A549 (cell line): ENCODE measurements at regions of chr1 and their contacts with region 1.

Region 1: DNA sequence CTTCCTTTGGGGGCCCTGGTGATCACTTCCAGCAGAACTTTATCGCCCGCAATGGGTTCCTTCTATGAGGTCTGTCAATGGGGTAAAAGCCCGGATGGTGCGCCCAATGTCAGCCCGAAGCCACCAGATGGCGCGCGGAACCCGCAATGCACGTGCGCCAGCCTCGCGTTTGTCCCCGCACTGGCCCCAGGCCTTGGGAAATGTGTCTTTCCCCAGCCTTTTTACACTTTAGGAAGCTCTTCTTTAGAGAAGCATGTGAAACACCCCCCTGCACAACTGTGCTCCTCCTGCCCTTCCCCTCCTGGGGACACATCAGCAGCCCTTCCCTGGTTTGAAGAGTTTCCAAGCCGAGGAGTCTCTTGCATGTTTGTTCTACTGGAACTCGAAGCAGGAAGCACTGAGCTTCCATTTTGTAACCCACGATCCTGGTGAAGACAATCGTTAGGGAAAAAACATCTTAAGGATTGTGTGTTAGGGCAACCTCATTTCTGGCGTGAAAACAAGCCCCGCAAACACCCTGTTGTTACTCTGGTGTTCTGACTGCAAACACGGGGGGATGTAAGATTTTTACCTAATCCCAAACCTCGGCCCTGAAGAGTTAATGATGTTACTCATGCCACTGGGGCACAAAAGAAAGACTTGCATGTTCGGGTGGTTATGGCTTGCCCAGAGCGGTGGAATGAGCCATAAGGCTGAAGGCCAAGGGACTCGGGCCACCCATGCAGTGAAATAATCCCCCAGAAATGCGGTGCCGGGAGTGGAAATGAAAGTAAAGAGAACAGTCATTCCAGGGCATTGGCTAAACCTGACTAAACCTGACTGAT is 20.4 kb upstream of the TARBP1 start:
- DNase-seq: peak; percentile 86 to 87
- ATAC-seq: peak; percentile 93 to 94
- H3K4me3 ChIP-seq: no peak overlapping the region
- H3K27ac ChIP-seq: peak overlapping the region; percentile 88 to 94
- H3K4me1 ChIP-seq: peaks cover 74% of the 10 kb centered on the region
- CTCF ChIP-seq: peak; percentile 95
- EP300 ChIP-seq: no peak
- POLR2A ChIP-seq: no peak
- RAD21 ChIP-seq: peak; percentile 98 to 100

Region 2: GRCh38 chr1:234398849-234399381 is 100.4 kb before region 1 on chr1:
- CTCF ChIA-PET with region 1: no interaction called
- POLR2A ChIA-PET with region 1: no interaction called
- DNase-seq: no peak
- ATAC-seq: no peak
- H3K4me3 ChIP-seq: no peak overlapping the region
- H3K27ac ChIP-seq: no peak overlapping the region
- H3K4me1 ChIP-seq: no peaks in the 10 kb centered on the region
- CTCF ChIP-seq: no peak
- EP300 ChIP-seq: no peak
- POLR2A ChIP-seq: no peak
- RAD21 ChIP-seq: no peak

Region 3: GRCh38 chr1:234486498-234487448 is 12.6 kb before region 1 on chr1:
- CTCF ChIA-PET with region 1: interaction called, 31 read pairs
- POLR2A ChIA-PET with region 1: interaction called, 7 read pairs
- DNase-seq: peak; percentile 59 to 69
- ATAC-seq: peak; percentile 84 to 86; a peak in 5 of 6 replicates
- H3K4me3 ChIP-seq: no peak overlapping the region
- H3K27ac ChIP-seq: peak overlapping the region in 1 of 2 experiments; percentile 36; a peak in 2 of 6 replicates
- H3K4me1 ChIP-seq: peaks cover 5% of the 10 kb centered on the region; the same call in 1 of the 3 replicates
- CTCF ChIP-seq: peak; percentile 75
- EP300 ChIP-seq: no peak
- POLR2A ChIP-seq: no peak
- RAD21 ChIP-seq: peak; percentile 87 to 91

Region 4: DNA sequence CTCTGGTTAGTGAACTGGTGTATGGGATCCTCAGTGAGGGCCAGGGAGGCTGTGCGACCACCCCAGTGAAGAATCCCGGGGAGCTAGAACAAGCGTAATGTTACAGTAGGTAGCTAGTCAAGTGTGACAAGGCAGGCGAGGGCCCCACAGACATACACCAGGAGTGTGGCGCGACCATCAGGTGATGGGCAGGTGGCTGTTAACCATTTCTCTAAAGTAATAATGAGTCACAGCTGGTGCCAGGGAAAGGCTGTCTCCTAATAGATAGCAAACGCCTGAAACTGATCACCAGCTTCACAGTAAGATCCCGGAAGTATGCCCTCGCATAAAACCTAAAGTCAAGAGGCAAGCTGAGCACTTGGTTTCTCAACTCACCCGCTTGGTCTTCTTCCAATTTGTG is 20.2 kb after region 1 on chr1:
- CTCF ChIA-PET with region 1: interaction called, 14 read pairs
- POLR2A ChIA-PET with region 1: no interaction called
- DNase-seq: no peak
- ATAC-seq: no peak
- H3K4me3 ChIP-seq: no peak overlapping the region
- H3K27ac ChIP-seq: peak overlapping the region in 1 of 2 experiments; percentile 91; a peak in 3 of 6 replicates
- H3K4me1 ChIP-seq: peaks cover 56% of the 10 kb centered on the region
- CTCF ChIP-seq: no peak
- EP300 ChIP-seq: no peak
- POLR2A ChIP-seq: no peak
- RAD21 ChIP-seq: no peak

Region 5: DNA sequence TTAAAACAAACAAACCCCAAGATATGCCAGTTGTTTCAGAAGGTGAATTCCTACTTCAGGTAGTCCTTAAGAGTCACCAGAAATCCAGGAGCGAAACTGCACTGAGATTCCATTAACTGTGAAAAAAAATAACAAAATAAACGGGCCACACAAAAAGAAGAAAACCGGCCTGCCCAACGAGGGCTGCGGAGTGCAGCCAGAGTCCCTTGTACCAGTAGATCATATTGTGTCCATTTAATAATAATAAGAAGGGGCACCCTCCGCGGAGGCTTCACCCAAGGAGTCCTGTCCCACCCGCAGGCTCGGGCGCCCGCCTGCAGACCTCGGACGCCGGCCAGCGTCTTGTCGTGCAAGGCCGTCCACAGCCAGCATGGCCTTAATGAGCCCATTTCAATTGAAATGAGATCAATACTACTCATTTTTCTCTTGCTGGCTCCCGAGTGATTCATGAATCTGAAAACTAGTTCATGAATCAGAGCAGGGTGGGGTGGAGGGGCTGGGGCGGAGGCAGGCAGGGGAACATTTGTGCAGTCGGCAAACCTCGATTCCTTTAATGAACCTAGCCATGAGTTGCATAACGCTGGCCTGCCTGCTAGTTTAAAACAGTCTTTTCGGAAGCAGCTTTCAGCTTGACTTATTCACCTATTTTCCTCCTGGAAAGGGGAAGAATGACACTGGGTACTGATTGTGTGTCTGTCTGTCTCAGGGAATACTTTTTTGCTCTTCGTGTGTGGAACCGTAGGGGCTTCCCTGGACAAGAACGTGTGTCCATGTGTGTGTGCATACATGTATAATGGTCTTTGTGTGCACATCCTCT is 223.8 kb after region 1 on chr1:
- CTCF ChIA-PET with region 1: interaction called, 11 read pairs
- POLR2A ChIA-PET with region 1: no interaction called
- DNase-seq: peak; percentile 43 to 65
- ATAC-seq: peak; percentile 21 to 24
- H3K4me3 ChIP-seq: peak overlapping the region; percentile 20; the same call in 1 of the 3 replicates
- H3K27ac ChIP-seq: peak overlapping the region; percentile 86 to 87
- H3K4me1 ChIP-seq: peaks cover 62% of the 10 kb centered on the region
- CTCF ChIP-seq: no peak
- EP300 ChIP-seq: no peak; a peak in 1 of 5 replicates
- POLR2A ChIP-seq: no peak
- RAD21 ChIP-seq: no peak; a peak in 1 of 5 replicates

Region 6: DNA sequence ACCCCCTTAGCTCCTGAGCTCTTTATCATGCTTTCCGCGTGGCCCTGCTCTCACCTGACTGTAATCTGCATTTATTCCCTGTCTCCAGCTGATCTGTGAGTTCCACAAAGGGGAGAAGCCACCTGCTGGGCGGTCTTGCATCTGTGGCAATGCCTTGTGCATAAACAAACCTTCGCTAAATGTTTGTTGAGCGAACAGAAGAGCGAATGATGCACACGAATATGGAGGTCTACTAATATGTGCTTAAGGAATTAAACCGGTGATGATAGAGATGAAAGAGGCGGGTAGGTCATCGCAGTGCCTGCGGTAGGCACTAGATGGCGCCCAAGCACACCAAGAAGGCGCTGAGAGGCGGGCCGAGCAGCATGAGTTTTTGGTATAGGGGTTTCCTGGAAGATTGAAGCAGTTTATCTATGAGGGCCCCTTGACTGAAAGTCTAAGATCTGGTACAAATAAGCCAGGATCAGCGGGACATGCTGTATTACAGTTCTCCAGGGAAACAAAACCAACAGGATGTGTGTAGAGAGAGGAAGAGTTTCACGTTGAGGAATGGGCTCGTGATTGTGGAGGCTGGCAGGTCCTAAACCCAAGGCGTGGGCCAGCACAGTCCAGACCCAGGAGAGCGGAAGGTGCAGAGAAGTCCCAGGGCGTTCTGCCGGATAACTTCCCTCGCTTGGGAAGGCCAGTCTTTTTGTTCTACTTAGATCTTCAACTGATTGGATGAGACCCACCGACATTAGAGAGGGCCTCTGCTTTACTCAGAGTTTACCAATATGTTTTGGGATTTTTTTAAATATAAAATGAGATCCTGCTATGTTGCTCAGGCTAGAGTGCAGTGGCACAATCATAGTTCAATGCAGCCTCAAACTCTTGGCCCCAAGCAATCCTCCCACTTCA is 594.6 kb after region 1 on chr1:
- CTCF ChIA-PET with region 1: interaction called, 30 read pairs
- POLR2A ChIA-PET with region 1: interaction called, 9 read pairs
- DNase-seq: peak; percentile 75 to 78
- ATAC-seq: peak; percentile 81 to 88
- H3K4me3 ChIP-seq: no peak overlapping the region
- H3K27ac ChIP-seq: peak overlapping the region; percentile 11 to 69; a peak in 4 of 6 replicates
- H3K4me1 ChIP-seq: peaks cover 8% of the 10 kb centered on the region
- CTCF ChIP-seq: peak; percentile 85
- EP300 ChIP-seq: no peak
- POLR2A ChIP-seq: no peak
- RAD21 ChIP-seq: peak; percentile 61 to 76